ENCODE measurements at regions of chr5 and their contacts with region 1.

Region 1: GRCh38 chr5:32232441-32233219 is 58.5 kb upstream of the GOLPH3 start:
- DNase-seq: peak; percentile 81 to 88
- ATAC-seq: peak; percentile 92 to 95 (median 93)
- H3K4me3 ChIP-seq: no peak overlapping the region
- H3K4me3 Mint-ChIP-seq: peak overlapping the region; percentile 59
- H3K27ac ChIP-seq: peak overlapping the region; percentile 57
- H3K27ac Mint-ChIP-seq: peak overlapping the region; percentile 94 to 97
- H3K4me1 ChIP-seq: peaks cover 23% of the 10 kb centered on the region
- H3K4me1 Mint-ChIP-seq: peaks cover 30 to 36% of the 10 kb centered on the region in 2 donors
- H3K27me3 ChIP-seq: no peaks in the 10 kb centered on the region
- H3K27me3 Mint-ChIP-seq: no peaks in the 10 kb centered on the region
- CTCF ChIP-seq: peak; percentile 87

Region 2: GRCh38 chr5:32261198-32261597 is 28.6 kb after region 1 on chr5:
- intact Hi-C with region 1: no loop called
- DNase-seq: no peak
- ATAC-seq: peak in 2 of 3 donors; percentile 40 to 79
- H3K4me3 ChIP-seq: no peak overlapping the region
- H3K4me3 Mint-ChIP-seq: peak overlapping the region; percentile 43
- H3K27ac ChIP-seq: peak overlapping the region; percentile 43
- H3K27ac Mint-ChIP-seq: peak overlapping the region; percentile 83 to 88
- H3K4me1 ChIP-seq: peaks cover 20% of the 10 kb centered on the region
- H3K4me1 Mint-ChIP-seq: peaks cover 9 to 25% of the 10 kb centered on the region in 2 donors
- H3K27me3 ChIP-seq: no peaks in the 10 kb centered on the region
- H3K27me3 Mint-ChIP-seq: no peaks in the 10 kb centered on the region
- CTCF ChIP-seq: no peak

Region 3: DNA sequence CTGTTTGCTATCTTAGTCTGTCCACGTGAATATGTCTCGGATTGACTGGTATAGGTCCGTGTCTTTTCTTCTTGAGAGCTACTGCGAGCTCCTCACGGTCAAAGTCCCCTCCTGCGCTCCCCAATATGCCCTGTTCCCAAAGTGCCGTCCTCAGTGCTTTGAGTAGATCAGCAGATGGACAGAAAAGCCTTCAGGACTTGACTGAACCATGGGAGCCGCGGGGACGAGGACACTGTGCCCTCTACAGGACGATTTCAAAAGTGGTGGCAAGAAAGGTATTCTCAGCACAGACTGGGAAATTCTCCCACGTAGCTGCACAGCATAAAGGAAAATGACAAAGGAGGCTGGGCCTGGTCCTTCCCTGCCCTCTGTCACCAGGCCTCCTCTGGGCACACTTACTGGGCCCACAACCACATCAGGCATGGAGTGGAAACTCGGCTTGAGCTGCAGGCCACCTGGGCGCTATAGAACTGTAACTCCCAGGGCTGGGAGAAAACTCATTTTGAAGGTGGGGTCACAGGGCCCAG is 96.7 kb after region 1 on chr5:
- intact Hi-C with region 1: loop called (anchors 1 kb)
- DNase-seq: peak; percentile 44 to 78
- ATAC-seq: peak; percentile 71 to 99 (median 96)
- H3K4me3 ChIP-seq: no peak overlapping the region
- H3K4me3 Mint-ChIP-seq: no peak overlapping the region
- H3K27ac ChIP-seq: no peak overlapping the region
- H3K27ac Mint-ChIP-seq: peak overlapping the region in 1 of 2 donors; percentile 55
- H3K4me1 ChIP-seq: no peaks in the 10 kb centered on the region
- H3K4me1 Mint-ChIP-seq: peaks cover 0 to 4% of the 10 kb centered on the region in 2 donors
- H3K27me3 ChIP-seq: no peaks in the 10 kb centered on the region
- H3K27me3 Mint-ChIP-seq: no peaks in the 10 kb centered on the region
- CTCF ChIP-seq: peak; percentile 73

Region 4: GRCh38 chr5:32419791-32420190 is 187.2 kb after region 1 on chr5:
- intact Hi-C with region 1: no loop called
- DNase-seq: no peak
- ATAC-seq: no peak
- H3K4me3 ChIP-seq: no peak overlapping the region
- H3K4me3 Mint-ChIP-seq: no peak overlapping the region
- H3K27ac ChIP-seq: no peak overlapping the region
- H3K27ac Mint-ChIP-seq: no peak overlapping the region
- H3K4me1 ChIP-seq: no peaks in the 10 kb centered on the region
- H3K4me1 Mint-ChIP-seq: peaks cover 43 to 56% of the 10 kb centered on the region in 2 donors
- H3K27me3 ChIP-seq: no peaks in the 10 kb centered on the region
- H3K27me3 Mint-ChIP-seq: no peaks in the 10 kb centered on the region
- CTCF ChIP-seq: no peak

Measured in natural killer cell (primary cell).